PC-9 (cell line): ENCODE measurements at regions of chr11 and their contacts with region 1.

Region 1: DNA sequence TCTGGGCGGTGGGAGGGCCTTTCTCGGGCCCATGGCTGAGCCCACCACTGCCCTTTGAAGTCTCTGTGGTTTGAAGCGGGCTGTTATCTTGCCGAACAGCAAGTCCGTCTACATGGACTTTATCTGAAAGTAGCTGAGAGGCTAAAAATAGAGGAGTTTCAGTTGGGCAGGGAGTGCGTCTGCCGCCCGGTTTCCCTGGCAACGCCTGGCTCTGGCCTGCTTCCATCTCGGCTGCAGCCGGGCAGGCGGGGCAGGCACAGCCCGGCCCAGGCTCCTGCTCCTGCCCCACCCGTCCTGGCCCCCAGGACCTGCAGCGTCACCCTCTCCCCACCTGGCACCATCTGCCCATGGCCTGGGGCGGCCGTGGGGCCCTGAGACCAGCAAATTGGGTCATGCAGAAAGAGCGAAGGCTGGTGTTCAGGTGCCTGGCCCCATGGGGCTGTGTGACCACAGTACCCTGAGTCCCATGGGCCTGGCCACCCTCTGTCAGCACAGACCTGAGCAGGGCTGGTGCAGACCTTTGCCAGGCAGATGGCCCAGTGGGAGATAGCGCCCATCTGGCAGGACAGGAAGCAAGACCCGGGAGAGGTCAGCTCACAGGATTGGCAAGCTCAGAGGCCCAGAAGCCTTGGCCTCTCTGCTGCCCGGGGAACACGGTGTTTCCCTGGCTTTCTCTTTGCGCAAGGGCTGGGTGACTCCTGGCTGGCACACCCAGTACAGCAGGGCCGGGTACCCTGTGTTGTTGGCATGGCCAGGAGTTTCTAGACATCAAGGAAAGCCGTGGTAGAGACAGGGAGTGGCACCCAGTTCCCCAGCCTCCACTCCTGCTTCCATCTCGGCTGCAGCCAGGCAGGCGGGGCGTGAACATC is 79.1 kb upstream of the KCNQ1OT1 start:
- DNase-seq: peak in 1 of 2 experiments; percentile 84
- H3K4me3 ChIP-seq: no peak overlapping the region
- H3K27ac ChIP-seq: no peak overlapping the region
- H3K4me1 ChIP-seq: peaks cover 16% of the 10 kb centered on the region
- H3K27me3 ChIP-seq: no peaks in the 10 kb centered on the region
- CTCF ChIP-seq: no peak

Region 2: GRCh38 chr11:2699531-2700414 is 79.1 kb before region 1 on chr11 and contains the start of gene KCNQ1OT1:
- CTCF ChIA-PET with region 1: no interaction called
- POLR2A ChIA-PET with region 1: no interaction called
- intact Hi-C with region 1: loop called (anchors 1 kb)
- DNase-seq: peak; percentile 87 to 94
- H3K4me3 ChIP-seq: peak within 1 kb of the TSS; percentile 84
- H3K27ac ChIP-seq: peak within 1 kb of the TSS; percentile 79
- H3K4me1 ChIP-seq: peaks cover 14% of the 10 kb centered on the region
- H3K27me3 ChIP-seq: no peaks in the 10 kb centered on the region
- CTCF ChIP-seq: no peak
- total RNA-seq, gene KCNQ1OT1: 3.4 and 4.3 TPM in 2 replicates

Region 3: DNA sequence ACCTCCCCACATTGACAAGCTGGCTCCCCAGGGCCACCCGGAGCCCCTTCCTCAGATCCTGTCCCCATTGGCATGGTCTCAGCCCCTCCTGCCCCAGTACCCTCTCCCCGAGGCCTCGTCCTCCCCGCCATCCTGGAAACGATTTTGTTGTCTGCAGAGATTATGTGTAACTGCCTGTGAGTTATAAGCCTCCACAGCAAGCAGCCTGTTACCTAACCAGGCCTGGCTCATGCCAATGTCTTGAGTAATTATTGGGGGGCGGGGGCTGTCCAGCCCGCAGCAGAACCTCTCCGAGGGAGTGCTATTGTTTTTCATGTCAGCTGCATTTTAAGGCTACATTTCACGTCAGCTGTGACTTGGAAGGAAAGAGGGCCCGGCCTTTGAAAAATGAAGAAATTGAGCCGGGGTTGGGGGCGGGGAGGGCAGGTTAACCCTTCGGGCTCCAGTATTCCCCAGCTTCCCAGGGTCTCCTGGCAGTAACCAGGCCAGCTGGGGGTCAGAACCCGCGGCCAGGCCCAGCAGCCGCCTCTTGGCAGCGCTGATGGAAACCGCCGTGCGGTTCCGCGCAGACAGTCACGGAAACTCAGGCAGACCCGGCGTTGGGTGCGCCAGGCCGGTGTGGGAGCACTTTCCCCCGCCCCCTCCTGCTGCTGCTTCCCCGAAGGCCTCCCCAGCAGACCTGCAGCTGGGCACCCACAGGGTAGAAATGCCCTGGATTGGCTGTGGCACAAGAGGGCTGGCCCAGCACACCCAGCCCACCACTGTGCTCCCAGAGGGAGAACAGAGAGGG is 47.2 kb after region 1 on chr11:
- CTCF ChIA-PET with region 1: no interaction called
- POLR2A ChIA-PET with region 1: no interaction called
- intact Hi-C with region 1: loop called (anchors 1 kb)
- DNase-seq: peak; percentile 75 to 84
- H3K4me3 ChIP-seq: peak overlapping the region; percentile 40; the same call in 1 of the 2 replicates
- H3K27ac ChIP-seq: peak overlapping the region; percentile 67
- H3K4me1 ChIP-seq: peaks cover 19% of the 10 kb centered on the region
- H3K27me3 ChIP-seq: no peaks in the 10 kb centered on the region
- CTCF ChIP-seq: no peak

Region 4: DNA sequence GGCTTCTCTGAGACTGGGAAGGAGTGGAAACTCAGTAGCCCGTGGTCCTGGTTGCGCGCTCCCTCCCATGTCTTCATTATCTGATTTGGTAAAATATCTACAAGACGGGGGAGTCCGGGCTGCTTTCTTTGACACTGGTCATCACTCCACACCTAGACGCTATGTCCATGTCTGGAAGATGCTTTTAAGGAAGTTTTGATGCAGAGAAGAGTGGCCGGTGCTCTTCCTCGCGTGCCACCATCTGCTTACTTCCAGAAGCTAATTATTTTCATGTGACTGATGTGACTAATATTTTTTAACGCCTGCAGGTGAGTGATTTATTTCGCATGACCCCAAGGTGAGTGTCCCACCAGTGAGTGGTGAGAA is 1615.0 kb after region 1 on chr11:
- CTCF ChIA-PET with region 1: no interaction called
- POLR2A ChIA-PET with region 1: no interaction called
- intact Hi-C with region 1: no loop called
- DNase-seq: no peak
- H3K4me3 ChIP-seq: peak overlapping the region; percentile 62; the same call in 1 of the 2 replicates
- H3K27ac ChIP-seq: no peak overlapping the region
- H3K4me1 ChIP-seq: no peaks in the 10 kb centered on the region
- H3K27me3 ChIP-seq: peaks cover 2% of the 10 kb centered on the region; the same call in 1 of the 2 replicates
- CTCF ChIP-seq: no peak